ENCODE measurements at regions of chr10 and their contacts with region 1.

Region 1: DNA sequence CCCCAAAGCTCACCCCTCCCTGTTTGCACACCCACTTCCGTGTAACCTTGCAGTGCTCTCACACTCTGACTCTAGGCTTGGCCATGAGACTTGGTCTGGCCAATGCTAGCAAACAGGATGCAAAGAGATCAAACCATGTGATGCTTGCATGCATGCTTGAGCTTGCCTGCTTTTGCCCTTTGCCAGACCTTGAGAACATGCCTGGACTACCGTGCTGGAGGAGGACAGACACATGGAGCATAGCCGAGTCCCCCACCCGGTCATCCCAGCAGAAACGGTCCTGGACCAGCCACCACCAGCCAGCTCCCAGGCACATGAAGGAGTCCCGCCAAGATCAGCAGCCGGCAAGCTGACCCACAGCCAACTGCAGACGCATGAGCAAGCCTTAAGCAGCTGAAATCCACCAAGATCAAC is 23.4 kb downstream of the PYROXD2 start:
- DNase-seq: no peak
- ATAC-seq: no peak
- H3K4me3 ChIP-seq: no peak overlapping the region
- H3K27ac ChIP-seq: no peak overlapping the region
- H3K4me1 ChIP-seq: no peaks in the 10 kb centered on the region
- H3K27me3 ChIP-seq: peaks cover 5% of the 10 kb centered on the region; the same call in 1 of the 2 replicates
- CTCF ChIP-seq: no peak

Region 2: DNA sequence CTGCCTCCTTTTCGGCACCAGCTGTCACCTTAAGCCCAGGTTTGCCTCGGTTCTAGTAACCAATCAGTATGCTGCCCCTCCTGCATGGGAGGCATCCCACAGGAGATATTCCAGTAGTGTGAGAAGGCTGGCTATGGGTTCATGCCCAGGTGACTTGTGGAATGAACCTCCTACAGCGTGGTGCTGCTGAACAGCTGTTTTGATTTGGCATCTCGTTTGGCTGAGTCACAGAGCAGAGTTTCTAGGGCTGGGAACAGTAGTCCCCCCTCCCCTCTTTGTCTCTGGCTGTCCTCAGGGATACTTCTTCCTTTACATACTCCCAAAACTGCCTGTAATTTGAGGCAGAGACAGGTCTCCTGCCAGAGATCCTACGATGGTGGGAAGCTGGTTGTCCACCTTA is 241.0 kb before region 1 on chr10:
- CTCF ChIA-PET with region 1: no interaction called
- POLR2A ChIA-PET with region 1: no interaction called
- in situ Hi-C with region 1: no loop called
- intact Hi-C with region 1: no loop called
- DNase-seq: no peak
- ATAC-seq: no peak
- H3K4me3 ChIP-seq: no peak overlapping the region
- H3K27ac ChIP-seq: no peak overlapping the region
- H3K4me1 ChIP-seq: no peaks in the 10 kb centered on the region
- H3K27me3 ChIP-seq: no peaks in the 10 kb centered on the region
- CTCF ChIP-seq: no peak

Region 3: DNA sequence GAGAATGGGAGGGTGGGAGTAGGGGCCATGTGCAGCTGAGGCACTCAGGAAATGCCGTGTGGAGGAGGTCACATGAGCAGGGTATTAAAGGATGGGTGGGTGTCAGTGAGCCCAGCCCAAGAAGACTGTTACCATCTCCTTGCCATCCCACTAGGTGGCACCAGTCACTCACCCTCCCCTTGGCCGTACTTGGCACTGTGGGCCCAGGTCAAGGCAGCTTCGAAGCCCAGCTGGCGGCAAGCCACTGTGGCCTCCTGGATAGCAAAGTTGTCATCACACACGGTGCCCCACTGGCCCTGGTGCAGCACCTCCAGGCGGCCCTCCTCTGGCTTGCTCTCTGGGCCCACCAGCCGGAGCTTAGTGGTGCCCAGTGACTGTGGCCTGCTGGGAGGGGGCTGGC is 129.0 kb before region 1 on chr10:
- CTCF ChIA-PET with region 1: no interaction called
- POLR2A ChIA-PET with region 1: no interaction called
- in situ Hi-C with region 1: no loop called
- intact Hi-C with region 1: loop called (anchors 10 kb)
- DNase-seq: no peak
- ATAC-seq: peak; percentile 84
- H3K4me3 ChIP-seq: no peak overlapping the region
- H3K27ac ChIP-seq: no peak overlapping the region; the same call in 1 of the 2 replicates
- H3K4me1 ChIP-seq: peaks cover 21% of the 10 kb centered on the region
- H3K27me3 ChIP-seq: no peaks in the 10 kb centered on the region
- CTCF ChIP-seq: peak; percentile 91

Region 4: GRCh38 chr10:98567391-98568133 is 176.0 kb after region 1 on chr10:
- CTCF ChIA-PET with region 1: no interaction called
- POLR2A ChIA-PET with region 1: no interaction called
- in situ Hi-C with region 1: no loop called
- intact Hi-C with region 1: no loop called
- DNase-seq: no peak
- ATAC-seq: no peak
- H3K4me3 ChIP-seq: no peak overlapping the region
- H3K27ac ChIP-seq: no peak overlapping the region
- H3K4me1 ChIP-seq: no peaks in the 10 kb centered on the region
- H3K27me3 ChIP-seq: peaks cover 8% of the 10 kb centered on the region; the same call in 1 of the 2 replicates
- CTCF ChIP-seq: no peak

Region 5: GRCh38 chr10:98778277-98778759 is 386.7 kb after region 1 on chr10:
- CTCF ChIA-PET with region 1: no interaction called
- POLR2A ChIA-PET with region 1: no interaction called
- in situ Hi-C with region 1: no loop called
- intact Hi-C with region 1: no loop called
- DNase-seq: no peak
- ATAC-seq: no peak
- H3K4me3 ChIP-seq: no peak overlapping the region
- H3K27ac ChIP-seq: no peak overlapping the region
- H3K4me1 ChIP-seq: no peaks in the 10 kb centered on the region
- H3K27me3 ChIP-seq: no peaks in the 10 kb centered on the region
- CTCF ChIP-seq: no peak

Measured in Panc1 (cell line).